Sigmoid colon (tissue), 7 donors: ENCODE measurements at regions of chr11 and their contacts with region 1.

Region 1: GRCh38 chr11:64152841-64153691 is 12.8 kb downstream of the MACROD1 start:
- DNase-seq: peak; percentile 81
- H3K4me3 ChIP-seq: no peak overlapping the region
- H3K27ac ChIP-seq: no peak overlapping the region
- H3K4me1 ChIP-seq: peaks cover 0 to 33% (median 28%) of the 10 kb centered on the region in 4 donors
- H3K27me3 ChIP-seq: no peaks in the 10 kb centered on the region
- CTCF ChIP-seq: peak; percentile 93 to 100 (median 96)
- EP300 ChIP-seq: no peak
- POLR2A ChIP-seq: no peak

Region 2: DNA sequence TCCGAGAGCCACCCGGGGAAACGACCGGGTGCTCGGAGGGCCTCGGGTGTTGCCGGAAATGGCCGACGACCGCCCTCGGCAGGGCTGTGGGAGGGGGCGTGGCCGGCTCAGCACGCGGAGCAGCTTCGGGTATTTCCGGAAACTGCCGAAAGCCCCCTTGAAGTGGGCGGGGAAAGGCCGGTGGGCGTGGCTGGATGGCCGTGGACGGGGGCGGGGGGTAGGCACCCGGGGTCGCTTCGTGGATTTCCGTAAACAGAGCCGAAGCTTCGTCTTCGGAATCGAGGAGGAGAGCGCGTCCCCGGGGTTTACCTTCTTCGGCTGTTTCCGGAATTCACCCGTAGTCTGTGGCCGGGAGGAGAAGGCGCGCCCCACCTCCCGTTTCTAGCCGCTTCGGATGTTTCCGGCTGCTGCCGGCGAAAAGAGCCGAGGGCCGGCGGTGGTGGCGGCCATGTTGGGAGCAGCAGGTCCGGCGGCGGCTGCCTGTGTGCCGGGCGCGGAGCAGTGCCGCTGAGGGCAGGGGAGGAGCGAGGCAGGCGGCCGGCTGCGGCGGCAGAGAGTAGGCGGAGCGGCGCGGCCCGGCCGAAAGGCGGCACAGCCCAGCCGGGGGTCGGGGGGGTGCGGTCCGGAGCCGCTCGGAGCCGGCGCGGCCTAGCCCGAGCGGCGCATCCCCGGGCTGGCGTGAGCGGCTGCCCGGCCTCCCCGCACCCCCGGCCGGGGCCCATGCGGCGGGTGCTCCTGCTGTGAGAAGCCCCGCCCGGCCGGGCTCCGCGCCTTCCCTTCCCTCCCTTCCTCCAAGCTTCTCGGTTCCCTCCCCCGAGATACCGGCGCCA is 314.2 kb before region 1 on chr11 and contains the start of gene MARK2:
- intact Hi-C with region 1: loop called (anchors 2 kb)
- DNase-seq: peak; percentile 99
- H3K4me3 ChIP-seq: peak within 1 kb of the TSS; percentile 71 to 95 (median 88)
- H3K27ac ChIP-seq: peak within 1 kb of the TSS; percentile 83 to 92 (median 87)
- H3K4me1 ChIP-seq: peaks cover 0 to 51% (median 48%) of the 10 kb centered on the region in 4 donors
- H3K27me3 ChIP-seq: no peaks in the 10 kb centered on the region
- CTCF ChIP-seq: no peak
- EP300 ChIP-seq: no peak
- POLR2A ChIP-seq: peak in 1 of 2 donors; percentile 35
- total RNA-seq, gene MARK2: 14.3 to 24.6 (median 18.2) TPM

Region 3: GRCh38 chr11:64000026-64000739 is 152.9 kb before region 1 on chr11:
- intact Hi-C with region 1: loop called (anchors 1 kb)
- DNase-seq: peak; percentile 87
- H3K4me3 ChIP-seq: peak overlapping the region; percentile 13 to 44 (median 38)
- H3K27ac ChIP-seq: peak overlapping the region in 2 of 4 donors; percentile 29 to 35
- H3K4me1 ChIP-seq: peaks cover 0 to 39% (median 30%) of the 10 kb centered on the region in 4 donors
- H3K27me3 ChIP-seq: peaks cover 0 to 7% (median 0%) of the 10 kb centered on the region in 3 donors
- CTCF ChIP-seq: peak in 3 of 4 experiments; percentile 48 to 89 (median 59)
- EP300 ChIP-seq: no peak
- POLR2A ChIP-seq: no peak

Region 4: DNA sequence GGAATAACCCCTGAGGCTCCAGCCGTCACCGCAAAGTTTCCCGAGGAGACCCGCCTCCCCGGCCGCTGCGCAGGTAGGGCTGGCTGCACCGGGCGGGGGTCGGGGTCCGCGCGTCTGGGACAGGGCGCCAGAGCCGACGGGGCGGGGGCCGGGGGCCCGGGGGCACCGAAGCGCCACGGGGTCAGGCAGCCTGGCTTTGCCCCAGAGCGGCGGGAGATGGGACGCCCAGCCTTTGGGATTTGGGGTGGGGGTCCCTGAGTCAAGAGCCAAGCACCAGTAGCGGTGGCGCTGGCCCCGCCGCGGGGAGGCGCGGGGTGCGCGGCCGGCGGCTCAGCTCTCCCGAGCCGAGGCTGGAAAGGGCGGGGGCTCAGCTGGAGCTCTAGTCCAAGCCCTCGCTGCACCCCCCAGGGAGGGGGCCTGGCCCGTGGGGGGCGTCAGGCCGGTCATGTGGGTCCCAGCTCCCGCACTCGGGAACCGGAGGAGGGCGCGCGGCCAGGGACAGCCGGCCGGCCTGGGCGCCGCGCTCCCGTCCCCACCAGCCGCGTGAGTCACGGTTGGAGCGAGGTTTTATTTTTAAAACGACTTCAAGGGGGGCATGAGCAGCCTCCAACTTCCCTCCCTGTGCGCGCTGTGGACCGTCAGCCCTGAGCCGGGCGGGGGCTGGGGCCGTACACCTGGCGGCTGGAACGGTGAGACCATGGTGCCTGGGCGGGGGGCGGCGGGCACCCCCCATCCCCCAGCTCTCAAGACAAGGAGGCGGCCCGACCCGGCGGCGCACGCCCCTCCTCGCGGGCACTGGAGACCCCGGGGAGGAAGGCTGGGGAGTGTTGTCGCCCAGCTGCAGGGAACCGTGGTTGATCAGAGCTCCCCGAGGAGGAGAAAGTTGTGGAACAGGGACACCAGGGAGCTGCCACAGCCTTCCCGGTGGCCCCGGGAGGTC is 116.7 kb before region 1 on chr11:
- intact Hi-C with region 1: loop called (anchors 2 kb)
- DNase-seq: peak; percentile 79
- H3K4me3 ChIP-seq: peak overlapping the region; percentile 55 to 69 (median 64)
- H3K27ac ChIP-seq: peak overlapping the region; percentile 55 to 74 (median 72)
- H3K4me1 ChIP-seq: peaks cover 0 to 36% (median 20%) of the 10 kb centered on the region in 4 donors
- H3K27me3 ChIP-seq: peaks cover 0 to 9% (median 0%) of the 10 kb centered on the region in 3 donors
- CTCF ChIP-seq: no peak
- EP300 ChIP-seq: no peak
- POLR2A ChIP-seq: no peak

Region 5: DNA sequence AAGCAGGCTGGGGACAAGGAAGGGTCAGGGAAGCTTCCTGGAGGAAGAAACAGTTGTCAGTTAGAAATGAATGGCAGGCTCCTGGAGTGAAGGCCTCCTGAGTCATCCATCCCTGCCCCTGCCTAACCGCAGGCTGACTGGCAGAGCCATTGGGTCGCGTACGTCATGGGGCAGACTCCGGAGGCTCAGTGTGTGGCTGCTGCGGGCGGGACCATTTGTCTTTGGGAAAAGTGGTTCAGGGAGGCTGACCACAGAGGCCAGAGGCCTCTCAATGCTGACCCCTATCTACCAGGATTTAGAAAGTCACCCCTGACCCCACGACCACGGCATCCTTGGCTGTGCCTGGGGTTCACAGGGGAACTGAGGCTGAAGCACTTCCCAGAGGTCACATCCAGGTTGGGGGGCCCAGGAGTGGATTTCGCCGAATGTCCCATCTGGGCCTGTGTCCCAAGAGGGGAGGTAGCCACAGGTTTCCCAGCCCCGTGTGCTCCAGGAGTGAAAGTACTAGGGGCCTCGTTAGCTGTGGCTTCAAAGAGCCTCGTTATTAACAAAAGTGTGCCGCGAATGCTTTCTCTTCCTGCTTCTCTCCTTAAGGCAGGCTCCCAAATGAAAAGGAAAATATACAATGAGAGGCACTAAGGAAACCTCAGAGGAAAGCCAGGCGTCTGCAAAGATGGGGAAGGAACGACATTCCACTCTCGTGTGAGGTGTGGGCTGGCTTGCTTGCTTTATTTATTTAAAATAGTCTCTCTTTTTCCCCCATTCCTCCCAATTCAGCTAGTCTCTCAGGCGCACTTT is 58.4 kb before region 1 on chr11:
- intact Hi-C with region 1: loop called (anchors 2 kb)
- DNase-seq: peak; percentile 83
- H3K4me3 ChIP-seq: no peak overlapping the region
- H3K27ac ChIP-seq: peak overlapping the region; percentile 53 to 86 (median 80)
- H3K4me1 ChIP-seq: peaks cover 0 to 74% (median 54%) of the 10 kb centered on the region in 4 donors
- H3K27me3 ChIP-seq: no peaks in the 10 kb centered on the region
- CTCF ChIP-seq: no peak
- EP300 ChIP-seq: no peak
- POLR2A ChIP-seq: no peak

Region 6: GRCh38 chr11:64120951-64121569 is 32.0 kb before region 1 on chr11:
- intact Hi-C with region 1: no loop called
- DNase-seq: peak; percentile 86
- H3K4me3 ChIP-seq: no peak overlapping the region
- H3K27ac ChIP-seq: peak overlapping the region in 3 of 4 donors; percentile 7 to 58 (median 57)
- H3K4me1 ChIP-seq: peaks cover 0 to 34% (median 15%) of the 10 kb centered on the region in 4 donors
- H3K27me3 ChIP-seq: no peaks in the 10 kb centered on the region
- CTCF ChIP-seq: no peak
- EP300 ChIP-seq: no peak
- POLR2A ChIP-seq: no peak